Right ventricle myocardium inferior (tissue), 1 donor: ENCODE measurements at regions of chr17 and their contacts with region 1.

Region 1: GRCh38 chr17:78798695-78799559 is 16.9 kb upstream of the CYTH1 start:
- DNase-seq: no peak
- ATAC-seq: no peak

Region 2: DNA sequence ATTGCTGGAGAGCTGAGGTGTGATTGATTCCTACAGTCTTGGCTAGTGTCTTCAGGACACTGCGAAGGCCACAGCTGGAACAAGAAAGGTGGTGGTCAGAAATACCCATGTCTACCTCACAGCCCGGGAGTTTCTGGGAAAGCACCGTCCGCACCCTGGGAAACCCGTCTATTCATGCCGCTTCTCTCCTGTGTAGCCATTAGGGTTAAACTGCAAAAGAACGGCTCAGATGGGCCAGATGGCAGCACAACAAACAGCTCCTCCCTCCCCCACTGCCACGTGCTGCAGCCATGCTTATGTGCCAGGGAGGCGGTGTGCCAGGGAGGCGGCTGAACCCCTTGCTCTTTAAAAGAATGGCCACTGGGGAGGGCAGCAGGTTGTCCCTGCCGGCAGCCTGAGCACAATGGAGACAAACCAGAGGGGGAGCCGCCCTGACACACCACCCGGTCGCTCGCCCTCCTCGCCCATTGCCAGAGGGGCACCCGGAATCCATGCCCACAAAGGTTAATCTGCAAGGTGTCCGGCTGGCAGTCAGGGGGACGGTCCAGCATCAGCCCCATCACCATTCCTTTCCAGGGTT is 82.0 kb before region 1 on chr17:
- intact Hi-C with region 1: loop called (anchors 5 kb)
- DNase-seq: peak; percentile 79
- ATAC-seq: peak; percentile 85